Sigmoid colon (tissue), 7 donors: ENCODE measurements at regions of chr5 and their contacts with region 1.

Region 1: DNA sequence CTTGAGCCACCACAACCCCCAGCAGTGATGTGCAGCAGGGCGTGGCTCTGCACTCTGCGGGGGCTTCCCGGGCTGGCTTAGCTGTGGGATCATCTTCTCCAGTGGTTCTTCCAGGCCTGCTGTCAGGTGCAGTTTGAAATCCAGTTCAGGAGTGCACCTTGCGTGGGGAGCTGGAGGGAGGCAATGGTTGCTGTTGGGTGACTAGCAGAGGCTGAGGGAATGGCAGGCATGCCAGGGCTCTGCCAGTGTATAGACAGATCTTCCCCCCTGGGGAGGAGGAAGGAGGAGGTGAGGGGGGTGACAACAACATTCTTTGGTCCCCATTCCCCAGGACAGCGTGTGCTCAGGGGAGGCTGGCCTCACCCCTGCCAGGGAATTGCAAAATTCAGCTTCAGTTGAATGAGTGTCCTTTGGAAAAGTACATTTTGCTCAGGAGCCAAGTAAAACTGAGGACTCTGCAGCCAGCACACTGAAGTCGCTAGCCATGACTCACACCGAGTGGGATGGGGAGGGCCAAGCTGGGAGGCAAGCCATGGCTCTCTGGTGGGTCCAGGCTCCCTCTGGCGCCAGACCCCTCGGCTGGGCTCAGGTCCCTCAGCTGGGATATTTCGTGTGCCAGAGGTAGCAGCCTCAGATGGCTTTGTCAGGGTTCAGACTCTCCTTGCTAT is 35.0 kb downstream of the ERGIC1 start:
- DNase-seq: peak; percentile 98
- H3K4me3 ChIP-seq: no peak overlapping the region
- H3K27ac ChIP-seq: peak overlapping the region; percentile 85 to 98 (median 94)
- H3K4me1 ChIP-seq: peaks cover 0 to 90% (median 85%) of the 10 kb centered on the region in 4 donors
- H3K27me3 ChIP-seq: no peaks in the 10 kb centered on the region
- CTCF ChIP-seq: peak in 1 of 4 experiments; percentile 28
- EP300 ChIP-seq: peak; percentile 96 to 100 (median 98)
- POLR2A ChIP-seq: peak in 1 of 2 donors; percentile 9

Region 2: GRCh38 chr5:172714491-172715421 is 154.3 kb before region 1 on chr5:
- intact Hi-C with region 1: loop called (anchors 2 kb)
- DNase-seq: peak; percentile 92
- H3K4me3 ChIP-seq: no peak overlapping the region
- H3K27ac ChIP-seq: peak overlapping the region; percentile 52 to 77 (median 64)
- H3K4me1 ChIP-seq: peaks cover 0 to 40% (median 20%) of the 10 kb centered on the region in 4 donors
- H3K27me3 ChIP-seq: peaks cover 0 to 5% (median 0%) of the 10 kb centered on the region in 3 donors
- CTCF ChIP-seq: peak; percentile 59 to 85 (median 84)
- EP300 ChIP-seq: peak in 2 of 4 donors; percentile 72 to 74
- POLR2A ChIP-seq: no peak

Region 3: GRCh38 chr5:172764849-172765765 is 104.0 kb before region 1 on chr5:
- intact Hi-C with region 1: no loop called
- DNase-seq: peak; percentile 98
- H3K4me3 ChIP-seq: peak overlapping the region; percentile 3 to 88 (median 54)
- H3K27ac ChIP-seq: peak overlapping the region; percentile 97 to 100 (median 99)
- H3K4me1 ChIP-seq: peaks cover 0 to 50% (median 40%) of the 10 kb centered on the region in 4 donors
- H3K27me3 ChIP-seq: no peaks in the 10 kb centered on the region
- CTCF ChIP-seq: no peak
- EP300 ChIP-seq: peak in 3 of 4 donors; percentile 66 to 95 (median 85)
- POLR2A ChIP-seq: no peak

Region 4: DNA sequence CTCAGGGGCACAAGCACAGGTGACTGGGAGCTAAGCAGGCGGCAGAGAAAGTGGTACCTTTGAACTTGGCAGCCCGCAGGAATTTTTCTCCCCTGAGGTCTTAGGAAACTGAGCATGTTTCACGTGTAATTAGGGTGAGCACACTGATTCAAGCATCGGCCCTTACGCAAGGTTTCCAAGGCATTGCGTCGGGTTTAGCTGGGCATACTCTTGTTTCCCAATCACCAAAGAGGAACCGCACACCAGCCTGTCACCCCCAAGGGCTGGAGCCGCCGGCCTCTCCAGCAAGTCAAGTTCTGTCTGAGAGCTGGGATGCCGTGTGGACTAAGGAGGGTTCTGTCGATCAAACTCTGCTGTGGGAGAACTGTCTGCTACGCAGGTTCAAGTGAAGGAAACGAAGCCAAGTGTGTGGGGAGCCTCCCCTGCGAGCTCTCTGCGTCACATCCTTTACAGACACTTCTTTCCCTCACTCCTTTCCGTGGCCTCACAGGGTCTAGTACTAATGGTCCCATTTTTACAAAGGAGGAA is 18.0 kb after region 1 on chr5:
- intact Hi-C with region 1: loop called (anchors 2 kb)
- DNase-seq: peak; percentile 94
- H3K4me3 ChIP-seq: peak overlapping the region in 2 of 4 donors; percentile 14 to 26
- H3K27ac ChIP-seq: peak overlapping the region; percentile 82 to 96 (median 90)
- H3K4me1 ChIP-seq: peaks cover 0 to 46% (median 44%) of the 10 kb centered on the region in 4 donors
- H3K27me3 ChIP-seq: no peaks in the 10 kb centered on the region
- CTCF ChIP-seq: no peak
- EP300 ChIP-seq: peak in 3 of 4 donors; percentile 43 to 85 (median 70)
- POLR2A ChIP-seq: peak in 1 of 2 donors; percentile 43

Region 5: DNA sequence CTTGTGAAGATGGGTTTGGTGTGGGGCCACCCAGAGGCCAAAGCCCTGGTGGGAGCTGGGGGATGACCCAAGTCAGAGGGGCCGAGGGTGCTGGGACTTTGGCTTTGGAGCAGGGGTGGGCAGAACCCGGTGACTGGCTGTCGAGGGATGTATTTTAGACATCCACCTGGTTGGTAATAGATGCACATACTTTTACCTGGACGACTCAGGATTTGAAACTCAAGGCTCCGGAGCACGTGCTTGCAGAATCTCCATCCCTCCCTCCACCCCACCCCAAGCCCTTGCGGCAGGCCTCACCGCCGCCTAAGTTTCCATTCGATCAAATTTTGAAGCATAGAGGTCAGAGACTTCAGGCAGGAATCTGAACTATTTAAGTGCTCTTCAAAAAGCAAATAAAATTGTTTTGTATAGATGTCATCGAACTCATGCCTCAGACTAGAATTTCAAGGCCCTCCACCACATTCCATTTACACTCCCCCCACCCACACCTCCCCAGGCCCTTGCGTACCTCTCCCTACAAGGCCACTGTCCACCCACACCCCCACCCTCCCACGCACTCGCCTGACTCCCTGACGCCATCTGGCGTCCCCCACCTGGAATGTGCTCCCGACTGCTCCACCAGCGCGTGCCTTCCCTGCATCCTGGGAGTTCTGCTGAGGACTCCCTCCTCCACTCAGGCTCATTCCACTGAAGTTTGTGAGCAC is 33.6 kb after region 1 on chr5:
- intact Hi-C with region 1: loop called (anchors 1 kb)
- DNase-seq: peak; percentile 97
- H3K4me3 ChIP-seq: no peak overlapping the region
- H3K27ac ChIP-seq: peak overlapping the region; percentile 87 to 96 (median 90)
- H3K4me1 ChIP-seq: peaks cover 0 to 85% (median 84%) of the 10 kb centered on the region in 4 donors
- H3K27me3 ChIP-seq: no peaks in the 10 kb centered on the region
- CTCF ChIP-seq: peak in 2 of 4 experiments; percentile 15 to 59
- EP300 ChIP-seq: peak; percentile 43 to 100 (median 86)
- POLR2A ChIP-seq: no peak